Vagina (tissue), 2 donors: ENCODE measurements at regions of chr1 and their contacts with region 1.

Region 1: DNA sequence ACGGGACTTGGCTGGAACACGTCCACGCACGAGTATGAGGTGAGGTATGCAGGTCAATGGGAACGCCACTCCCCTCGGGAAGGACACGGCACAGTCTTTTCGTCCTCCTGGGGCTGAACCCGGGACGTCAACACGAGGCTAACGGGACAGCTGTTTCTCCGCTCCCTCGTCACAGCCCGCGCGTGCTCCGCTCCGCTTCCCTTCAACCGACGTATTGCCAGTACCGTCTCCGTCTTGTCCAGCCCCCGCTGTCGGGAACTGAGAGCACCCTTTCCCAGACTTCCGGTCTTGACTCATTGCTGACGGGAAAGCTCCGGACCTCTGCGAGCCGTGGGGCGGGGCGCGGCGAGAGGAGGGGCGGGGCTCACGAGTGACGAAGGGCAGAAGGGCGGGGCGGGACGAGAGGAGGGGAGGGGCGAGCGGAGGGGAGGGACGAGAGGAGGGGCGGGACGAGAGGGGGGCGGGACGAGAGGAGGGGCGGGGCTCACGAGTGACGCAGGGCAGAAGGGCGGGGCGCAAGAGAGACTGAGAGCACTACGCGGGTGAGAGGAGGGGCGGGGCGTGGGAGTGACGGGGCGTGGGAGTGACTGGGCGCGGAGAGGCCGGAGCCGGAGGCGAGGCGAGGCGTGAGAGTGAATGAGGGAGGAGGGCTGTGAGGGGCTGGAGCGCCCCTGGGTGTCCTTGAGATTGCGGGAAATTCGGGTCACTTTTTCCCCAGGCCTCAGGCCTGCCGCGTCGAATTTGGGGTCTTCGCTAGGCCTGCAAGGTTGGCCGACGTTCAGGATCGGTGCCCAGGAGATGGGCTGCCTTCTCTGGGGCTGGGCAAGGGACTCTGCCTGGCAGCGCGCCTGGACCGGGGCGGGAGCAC is 22.2 kb upstream of the CFAP126 start:
- DNase-seq: peak; percentile 98 to 99
- H3K4me3 ChIP-seq: peak overlapping the region; percentile 70 to 73
- H3K27ac ChIP-seq: peak overlapping the region; percentile 94
- H3K4me1 ChIP-seq: peaks cover 16% of the 10 kb centered on the region
- H3K27me3 ChIP-seq: no peaks in the 10 kb centered on the region
- CTCF ChIP-seq: no peak
- POLR2A ChIP-seq: peak; percentile 15 to 95

Region 2: DNA sequence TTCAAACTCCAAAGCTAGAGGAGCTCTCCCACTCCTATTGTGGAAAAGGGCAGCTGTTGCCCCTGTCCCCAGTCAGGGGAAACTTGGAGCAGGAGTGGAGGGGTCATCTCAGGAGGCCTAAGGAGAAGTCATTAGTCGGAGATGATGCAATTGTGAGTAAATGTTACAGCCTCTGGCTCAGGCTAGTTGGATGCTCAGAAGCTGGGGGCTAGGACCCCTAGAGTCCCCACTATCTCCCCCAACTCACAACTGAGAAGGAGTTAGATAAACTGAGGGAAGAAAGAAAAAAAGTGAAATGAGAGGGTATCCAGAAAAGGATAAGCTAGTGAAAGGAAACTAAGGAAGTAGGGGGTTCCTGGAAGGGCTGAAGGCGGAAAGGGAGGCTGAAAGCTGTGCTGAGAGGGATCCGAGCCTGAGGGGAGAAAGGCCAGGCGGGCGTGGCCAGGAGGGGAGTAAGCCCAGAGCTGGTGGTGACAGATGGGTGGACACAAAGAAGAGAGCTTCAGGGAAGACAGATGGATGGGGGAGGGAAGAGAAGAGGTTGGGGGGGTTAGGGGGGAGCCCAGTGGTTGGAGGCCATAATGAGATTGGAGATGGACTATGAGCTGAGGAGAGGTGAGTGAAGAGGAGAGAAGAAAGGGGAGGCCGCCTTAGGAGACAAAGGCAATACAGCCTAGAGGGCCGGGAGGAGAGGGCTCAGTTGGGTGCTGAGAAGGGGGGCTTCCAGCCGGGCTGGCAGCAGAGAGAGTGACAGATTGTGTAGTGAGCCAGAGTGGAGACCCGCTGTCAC is 1027.6 kb before region 1 on chr1:
- intact Hi-C with region 1: no loop called
- DNase-seq: peak in 1 of 2 donors; percentile 60
- H3K4me3 ChIP-seq: no peak overlapping the region
- H3K27ac ChIP-seq: no peak overlapping the region
- H3K4me1 ChIP-seq: no peaks in the 10 kb centered on the region
- H3K27me3 ChIP-seq: no peaks in the 10 kb centered on the region
- CTCF ChIP-seq: no peak
- POLR2A ChIP-seq: no peak

Region 3: DNA sequence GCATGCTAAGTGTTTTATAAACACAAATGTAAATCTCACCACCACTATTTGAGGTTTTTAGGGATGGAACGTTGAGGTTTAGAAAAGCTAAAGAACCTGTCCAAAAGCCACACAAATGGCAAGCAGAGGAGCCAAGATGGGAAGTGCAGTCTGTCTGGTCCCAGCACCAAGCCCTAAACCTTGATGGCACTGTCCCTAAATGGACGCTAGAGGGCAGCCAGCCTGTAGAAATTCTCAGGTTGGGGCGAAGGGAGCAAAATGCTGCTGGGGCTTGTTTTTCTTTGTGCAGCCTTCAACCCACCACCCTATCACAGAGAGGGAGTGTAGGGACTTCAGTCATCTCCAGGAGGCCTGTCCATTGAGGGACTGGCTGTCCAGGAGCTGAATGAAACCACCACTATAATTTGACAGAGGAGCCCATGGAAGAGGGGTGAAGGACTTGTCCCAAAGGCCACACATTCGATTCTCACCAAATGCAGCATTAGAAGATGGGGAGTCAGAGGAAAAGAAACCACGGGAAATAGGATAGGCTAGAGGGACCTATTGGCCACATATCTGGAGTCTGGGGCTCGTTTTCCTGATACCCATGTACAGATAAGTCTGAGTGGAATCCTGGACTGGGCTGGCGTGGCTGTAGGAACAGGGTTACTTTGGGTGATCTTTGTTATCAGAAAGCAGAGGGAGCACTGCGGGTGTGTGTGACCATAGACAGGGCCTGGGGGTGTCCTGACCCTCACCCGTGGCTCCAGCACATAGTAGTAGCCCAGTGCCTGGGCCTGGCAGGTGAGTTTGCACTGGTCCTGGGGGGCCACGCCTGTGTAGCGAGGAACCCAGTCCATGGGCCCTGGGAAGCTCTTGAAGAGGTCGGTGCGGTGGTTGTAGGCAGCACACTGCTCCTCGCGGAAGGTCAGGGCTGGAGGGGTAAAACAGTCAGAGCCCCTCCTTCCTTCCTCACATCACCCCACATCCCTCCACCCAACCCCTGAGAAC is 197.2 kb before region 1 on chr1:
- intact Hi-C with region 1: loop called (anchors 10 kb)
- DNase-seq: no peak
- H3K4me3 ChIP-seq: peak overlapping the region in 1 of 2 donors; percentile 11
- H3K27ac ChIP-seq: peak overlapping the region; percentile 59
- H3K4me1 ChIP-seq: peaks cover 48% of the 10 kb centered on the region
- H3K27me3 ChIP-seq: no peaks in the 10 kb centered on the region
- CTCF ChIP-seq: peak; percentile 55 to 86 (median 79)
- POLR2A ChIP-seq: no peak

Region 4: DNA sequence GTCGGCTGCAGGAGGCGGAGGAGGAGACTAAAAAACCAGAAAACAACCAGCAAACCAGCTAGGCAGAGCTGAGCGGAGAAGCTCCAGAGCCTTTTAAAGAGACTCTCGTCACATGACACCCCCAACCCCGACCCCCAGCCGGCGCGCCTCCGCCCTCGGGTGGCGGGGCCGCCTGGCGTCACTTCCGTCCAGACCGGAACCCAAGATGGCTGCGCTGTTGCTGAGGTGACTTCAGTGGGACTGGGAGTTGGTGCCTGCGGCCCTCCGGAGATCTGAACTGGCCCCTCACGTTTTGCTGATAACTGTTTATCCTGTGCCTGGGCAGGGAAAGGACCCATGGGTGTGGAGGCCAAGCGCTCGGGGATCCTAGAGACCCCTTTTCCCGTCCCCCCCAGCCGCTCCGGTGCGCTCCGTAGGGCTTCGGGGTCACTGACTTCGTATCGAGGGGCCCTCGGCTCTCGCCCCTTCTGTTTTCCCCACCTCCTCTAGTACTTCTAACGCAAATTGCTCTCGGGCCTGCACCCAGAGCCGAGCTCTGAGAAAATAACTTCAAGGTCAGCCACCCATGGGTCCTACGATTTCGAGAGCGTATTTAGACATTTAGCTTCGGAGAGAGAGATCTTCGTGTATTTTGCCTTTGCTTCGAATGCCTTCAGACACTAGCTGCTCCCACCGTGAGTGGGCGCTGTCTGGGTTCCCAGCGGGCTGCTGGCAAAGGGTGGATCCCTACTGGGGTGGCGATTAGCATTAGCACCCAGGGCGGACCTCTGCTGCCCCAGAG is 75.5 kb before region 1 on chr1 and contains the start of gene SDHC:
- intact Hi-C with region 1: loop called (anchors 10 kb)
- DNase-seq: peak in 1 of 2 donors; percentile 95
- H3K4me3 ChIP-seq: peak within 1 kb of the TSS; percentile 61 to 78
- H3K27ac ChIP-seq: peak within 1 kb of the TSS; percentile 91
- H3K4me1 ChIP-seq: peaks cover 17% of the 10 kb centered on the region
- H3K27me3 ChIP-seq: no peaks in the 10 kb centered on the region
- CTCF ChIP-seq: no peak
- POLR2A ChIP-seq: peak in 1 of 2 donors; percentile 69
- total RNA-seq, gene SDHC: 44.9 TPM

Region 5: DNA sequence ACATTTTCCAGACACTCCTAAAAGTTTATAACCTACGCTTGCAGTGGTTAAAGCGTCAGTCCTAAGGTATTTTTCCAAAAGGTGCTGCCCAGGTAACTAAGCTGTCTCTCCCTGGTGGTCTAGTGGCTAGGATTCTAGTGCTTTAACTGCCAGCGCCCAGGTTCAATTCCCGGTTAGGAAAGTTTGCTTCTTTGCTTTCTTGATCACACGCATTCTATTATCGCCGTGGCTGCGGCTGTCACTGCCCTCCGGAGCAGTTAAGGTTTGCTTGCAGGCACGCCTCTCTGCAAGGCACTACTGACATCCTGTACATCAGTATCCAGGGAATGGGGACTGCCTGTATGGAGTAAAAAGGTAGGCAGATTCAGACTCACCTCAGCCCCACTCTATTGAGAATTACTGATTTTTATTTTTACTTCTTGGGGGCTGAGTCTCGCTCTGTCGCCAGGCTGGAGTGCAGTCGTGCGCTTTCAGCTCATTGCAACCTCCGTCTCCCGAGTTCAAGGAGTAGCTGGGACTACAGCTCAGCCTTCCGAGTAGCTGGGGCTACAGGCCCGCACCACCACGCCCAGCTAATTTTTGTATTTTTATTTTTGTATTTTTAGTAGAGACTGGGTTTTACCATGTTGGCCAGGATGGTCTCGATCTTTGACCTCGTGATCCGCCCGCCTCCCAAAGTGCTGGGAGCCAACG is 31.0 kb after region 1 on chr1:
- intact Hi-C with region 1: no loop called
- DNase-seq: no peak
- H3K4me3 ChIP-seq: no peak overlapping the region
- H3K27ac ChIP-seq: no peak overlapping the region
- H3K4me1 ChIP-seq: peaks cover 6% of the 10 kb centered on the region
- H3K27me3 ChIP-seq: no peaks in the 10 kb centered on the region
- CTCF ChIP-seq: no peak
- POLR2A ChIP-seq: no peak